Activated naive CD4-positive, alpha-beta T cell treated with anti-CD3 and anti-CD28 coated beads for 36 hours (primary cell): ENCODE measurements at regions of chr3 and their contacts with region 1.

Region 1: DNA sequence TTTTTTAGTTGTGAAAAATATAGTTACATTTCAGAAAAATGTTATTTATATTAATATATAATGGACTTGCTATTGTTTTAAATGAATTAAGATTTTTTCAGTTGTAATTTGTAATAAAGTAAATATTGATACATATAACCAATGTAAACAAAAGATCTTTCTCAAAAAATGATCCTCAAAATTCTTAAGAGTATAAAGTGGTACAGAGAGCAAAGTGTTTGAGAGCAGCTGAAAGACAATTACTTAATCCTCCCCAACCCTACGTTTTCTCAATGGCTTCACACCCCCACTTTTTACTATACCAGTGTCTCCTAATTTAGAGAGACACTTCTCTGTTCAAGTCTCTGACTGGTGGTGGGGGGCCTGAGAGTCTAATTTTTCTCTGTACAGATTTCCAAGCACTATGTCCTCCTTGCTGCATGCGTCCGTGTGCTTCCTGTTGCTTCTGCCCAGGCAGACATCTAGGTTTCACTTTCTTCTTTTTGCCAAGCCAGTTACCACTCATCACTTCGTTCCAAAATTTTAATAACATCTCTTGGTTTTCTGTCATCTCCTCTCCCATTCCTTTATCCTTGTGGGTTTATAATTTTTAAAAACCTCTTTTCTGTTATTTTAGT is 276.3 kb upstream of the DNAJC19 start:
- DNase-seq: no peak
- H3K4me3 Mint-ChIP-seq: peak overlapping the region; percentile 57
- H3K27ac Mint-ChIP-seq: no peak overlapping the region
- H3K4me1 Mint-ChIP-seq: peaks cover 3% of the 10 kb centered on the region
- H3K27me3 Mint-ChIP-seq: peaks cover 6% of the 10 kb centered on the region

Region 2: GRCh38 chr3:181292984-181293383 is 27.2 kb after region 1 on chr3:
- CTCF ChIA-PET with region 1: no interaction called
- intact Hi-C with region 1: loop called (anchors 1 kb)
- DNase-seq: no peak
- H3K4me3 Mint-ChIP-seq: no peak overlapping the region
- H3K27ac Mint-ChIP-seq: no peak overlapping the region
- H3K4me1 Mint-ChIP-seq: no peaks in the 10 kb centered on the region
- H3K27me3 Mint-ChIP-seq: no peaks in the 10 kb centered on the region

Region 3: DNA sequence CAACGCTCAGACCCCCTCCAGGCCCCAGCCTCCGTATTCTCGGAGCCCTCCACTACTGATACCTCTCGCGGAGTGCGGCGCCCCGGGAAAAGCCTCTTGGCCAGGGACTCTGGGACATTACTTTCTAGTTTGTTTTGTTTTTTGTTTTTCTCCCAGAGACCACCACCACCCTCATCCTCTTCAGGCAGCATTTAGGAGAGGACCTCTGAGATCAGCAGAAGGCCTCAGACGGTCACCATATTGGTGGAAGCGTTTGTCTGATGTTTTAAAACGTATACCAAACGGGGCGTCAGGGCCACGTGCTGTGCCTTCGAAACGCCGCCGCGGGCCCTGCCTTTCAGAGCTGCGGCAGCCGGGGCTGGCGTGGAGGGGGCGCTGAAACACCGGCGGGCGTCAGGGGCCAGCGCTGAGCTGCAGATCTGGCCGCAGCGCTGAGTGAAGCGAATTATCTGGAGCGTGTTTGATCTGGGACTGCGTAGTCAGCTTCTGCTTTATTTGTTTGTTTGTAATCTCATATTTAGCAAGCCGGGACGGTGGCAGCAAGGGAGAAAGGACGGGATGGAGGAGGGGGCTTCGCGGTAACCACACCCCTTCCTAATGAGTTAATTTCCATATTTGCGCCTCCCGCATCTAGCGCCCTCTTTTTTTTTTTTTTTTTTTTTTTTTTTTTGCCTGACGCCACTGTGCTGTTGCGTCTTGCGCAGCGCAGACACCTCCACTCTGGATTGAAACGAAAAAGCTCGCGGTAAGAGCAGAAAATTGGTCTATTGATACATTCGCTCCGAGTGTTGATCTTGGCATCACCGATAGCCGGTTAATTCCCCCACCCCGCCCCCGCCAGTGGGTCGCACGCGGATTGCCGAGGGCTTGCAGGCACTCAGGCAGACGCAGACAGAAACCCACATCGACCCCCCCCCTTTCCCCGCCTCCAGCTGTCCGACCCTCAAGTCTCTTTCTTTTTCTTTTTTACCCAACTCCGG is 460.8 kb after region 1 on chr3:
- CTCF ChIA-PET with region 1: no interaction called
- intact Hi-C with region 1: no loop called
- DNase-seq: no peak
- H3K4me3 Mint-ChIP-seq: peak overlapping the region; percentile 49
- H3K27ac Mint-ChIP-seq: no peak overlapping the region
- H3K4me1 Mint-ChIP-seq: peaks cover 22% of the 10 kb centered on the region
- H3K27me3 Mint-ChIP-seq: peaks cover 88% of the 10 kb centered on the region

Region 4: GRCh38 chr3:181948286-181948685 is 682.5 kb after region 1 on chr3:
- CTCF ChIA-PET with region 1: no interaction called
- intact Hi-C with region 1: no loop called
- DNase-seq: no peak
- H3K4me3 Mint-ChIP-seq: no peak overlapping the region
- H3K27ac Mint-ChIP-seq: no peak overlapping the region
- H3K4me1 Mint-ChIP-seq: no peaks in the 10 kb centered on the region
- H3K27me3 Mint-ChIP-seq: peaks cover 6% of the 10 kb centered on the region